ENCODE measurements at regions of chr10 and their contacts with region 1.

Region 1: GRCh38 chr10:19819419-19820033 is 3.3 kb downstream of the PLXDC2 start:
- DNase-seq: peak in 5 of 7 donors; percentile 41 to 73 (median 69)
- H3K4me3 ChIP-seq: peak overlapping the region in 1 of 4 donors; percentile 87
- H3K27ac ChIP-seq: peak overlapping the region in 3 of 5 donors; percentile 35 to 87 (median 56)
- H3K4me1 ChIP-seq: peaks cover 0 to 29% of the 10 kb centered on the region in 2 donors
- H3K27me3 ChIP-seq: no peaks in the 10 kb centered on the region
- CTCF ChIP-seq: peak; percentile 74 to 94 (median 86)
- POLR2A ChIP-seq: no peak

Region 2: DNA sequence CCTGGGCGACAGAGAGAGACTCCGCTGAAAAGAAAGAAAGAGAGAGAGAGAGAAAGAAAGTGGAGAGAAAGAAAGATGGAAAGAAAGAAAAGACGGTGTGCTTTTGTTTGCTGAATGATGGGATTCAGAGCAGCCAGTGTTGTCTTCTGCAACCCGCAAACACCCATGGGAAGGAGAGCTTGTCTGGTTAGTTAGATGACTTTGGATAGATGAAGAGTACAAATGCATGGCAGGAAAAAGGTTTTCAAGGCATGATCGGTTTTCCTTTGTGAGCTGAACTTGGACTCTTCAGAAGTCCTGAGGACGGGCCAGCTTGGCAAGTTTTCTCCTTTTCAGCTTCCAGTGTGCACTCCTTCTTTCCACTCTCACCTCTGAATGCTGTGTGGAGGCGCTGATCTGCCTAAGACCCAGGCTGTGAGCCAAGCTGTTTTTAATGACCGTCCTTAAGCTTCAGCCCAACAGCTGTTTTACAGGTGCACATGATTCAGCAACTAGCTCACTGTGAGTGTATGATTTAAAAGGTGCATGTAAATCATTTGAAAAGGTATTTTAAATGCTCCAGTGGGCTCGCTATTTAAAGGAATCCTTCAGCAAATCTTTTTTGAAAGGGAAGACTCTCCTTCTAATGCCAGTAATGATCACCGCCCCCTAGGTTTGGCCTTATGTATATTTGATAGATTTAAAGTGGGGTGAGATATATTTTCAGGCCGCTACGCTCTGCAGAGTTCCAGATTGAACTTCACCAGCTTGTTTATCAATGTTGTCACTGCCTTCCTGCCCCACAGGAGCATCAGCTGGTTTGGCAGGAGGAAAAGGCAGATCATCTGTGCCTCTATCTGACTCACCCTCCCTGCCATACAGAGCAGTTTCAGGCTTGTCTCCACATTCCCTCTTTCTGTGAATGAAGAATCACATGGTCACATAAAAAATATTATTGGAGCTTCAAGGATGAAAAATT is 111.7 kb after region 1 on chr10:
- intact Hi-C with region 1: loop called in 1 of 2 experiments (anchors 10 kb)
- DNase-seq: peak; percentile 56 to 87 (median 79)
- H3K4me3 ChIP-seq: no peak overlapping the region
- H3K27ac ChIP-seq: peak overlapping the region in 4 of 5 donors; percentile 2 to 83 (median 62)
- H3K4me1 ChIP-seq: peaks cover 24 to 36% of the 10 kb centered on the region in 2 donors
- H3K27me3 ChIP-seq: no peaks in the 10 kb centered on the region
- CTCF ChIP-seq: peak in 1 of 6 experiments; percentile 18
- POLR2A ChIP-seq: peak in 1 of 2 donors; percentile 49